ENCODE measurements at regions of chrX and their contacts with region 1.

Region 1: GRCh38 chrX:48025561-48025960 is 18.8 kb downstream of the SPACA5 start:
- DNase-seq: peak; percentile 55
- ATAC-seq: peak; percentile 48
- H3K4me3 Mint-ChIP-seq: no peak overlapping the region
- H3K27ac Mint-ChIP-seq: peak overlapping the region; percentile 66
- H3K4me1 Mint-ChIP-seq: peaks cover 18% of the 10 kb centered on the region
- H3K27me3 Mint-ChIP-seq: no peaks in the 10 kb centered on the region

Region 2: GRCh38 chrX:47828984-47829383 is 196.6 kb before region 1 on chrX:
- CTCF ChIA-PET with region 1: interaction called, 15 read pairs
- POLR2A ChIA-PET with region 1: no interaction called
- DNase-seq: no peak
- ATAC-seq: no peak
- H3K4me3 Mint-ChIP-seq: no peak overlapping the region
- H3K27ac Mint-ChIP-seq: no peak overlapping the region
- H3K4me1 Mint-ChIP-seq: no peaks in the 10 kb centered on the region
- H3K27me3 Mint-ChIP-seq: no peaks in the 10 kb centered on the region

Region 3: DNA sequence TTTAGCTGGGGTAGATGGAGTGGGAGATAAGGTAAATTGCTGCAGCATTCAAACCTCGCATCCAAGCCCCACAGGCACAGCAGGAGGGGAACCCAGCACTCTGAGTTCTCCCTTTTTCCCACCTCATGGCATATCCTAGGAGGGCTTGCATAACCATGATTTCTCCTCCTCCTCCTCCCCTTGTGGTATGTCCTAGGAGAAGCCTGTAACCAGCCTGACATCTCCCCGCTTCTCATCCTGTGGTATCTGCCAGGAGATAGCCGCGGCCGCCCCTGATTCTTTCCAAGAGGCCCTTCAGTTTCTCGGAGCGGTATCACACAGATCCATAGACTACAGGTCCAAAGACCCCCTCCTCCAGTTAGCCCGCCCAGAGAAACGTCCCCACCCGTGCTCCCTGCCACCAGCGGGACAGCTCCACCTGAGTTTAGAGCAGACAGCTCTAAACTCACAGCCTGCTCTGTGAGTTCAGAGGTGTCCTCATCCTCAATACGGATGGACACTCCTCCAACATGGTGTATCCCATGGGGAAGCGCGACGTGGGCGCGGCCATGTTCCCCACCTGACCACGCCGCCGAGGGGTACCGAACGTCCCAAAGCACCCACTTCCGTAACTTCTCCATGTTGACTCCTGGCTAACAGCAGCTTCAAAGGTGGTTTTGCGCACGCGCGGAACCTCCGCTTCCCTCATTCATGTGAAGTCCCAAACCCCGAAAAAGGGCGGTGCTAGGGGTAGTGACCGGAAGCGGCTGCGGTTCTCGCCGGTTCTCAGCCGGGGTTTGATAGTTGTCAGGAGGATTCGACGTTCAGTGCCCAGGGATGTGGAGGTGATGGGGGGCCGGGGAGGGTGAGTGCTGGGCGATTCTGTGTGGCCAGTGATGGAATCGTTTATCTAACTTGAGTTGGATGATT is 189.1 kb before region 1 on chrX and contains the start of gene ZNF81:
- CTCF ChIA-PET with region 1: interaction called, 20 read pairs
- POLR2A ChIA-PET with region 1: interaction called, 3 read pairs
- DNase-seq: peak; percentile 94
- ATAC-seq: peak; percentile 97
- H3K4me3 Mint-ChIP-seq: peak within 1 kb of the TSS; percentile 91
- H3K27ac Mint-ChIP-seq: peak within 1 kb of the TSS; percentile 95
- H3K4me1 Mint-ChIP-seq: peaks cover 20% of the 10 kb centered on the region
- H3K27me3 Mint-ChIP-seq: no peaks in the 10 kb centered on the region
- total RNA-seq, gene ZNF81: 9.4 to 10.4 TPM

Region 4: GRCh38 chrX:47854474-47854873 is 171.1 kb before region 1 on chrX:
- CTCF ChIA-PET with region 1: interaction called, 20 read pairs
- POLR2A ChIA-PET with region 1: no interaction called
- DNase-seq: peak; percentile 26
- ATAC-seq: no peak
- H3K4me3 Mint-ChIP-seq: no peak overlapping the region
- H3K27ac Mint-ChIP-seq: no peak overlapping the region
- H3K4me1 Mint-ChIP-seq: peaks cover 11% of the 10 kb centered on the region
- H3K27me3 Mint-ChIP-seq: no peaks in the 10 kb centered on the region

Region 5: DNA sequence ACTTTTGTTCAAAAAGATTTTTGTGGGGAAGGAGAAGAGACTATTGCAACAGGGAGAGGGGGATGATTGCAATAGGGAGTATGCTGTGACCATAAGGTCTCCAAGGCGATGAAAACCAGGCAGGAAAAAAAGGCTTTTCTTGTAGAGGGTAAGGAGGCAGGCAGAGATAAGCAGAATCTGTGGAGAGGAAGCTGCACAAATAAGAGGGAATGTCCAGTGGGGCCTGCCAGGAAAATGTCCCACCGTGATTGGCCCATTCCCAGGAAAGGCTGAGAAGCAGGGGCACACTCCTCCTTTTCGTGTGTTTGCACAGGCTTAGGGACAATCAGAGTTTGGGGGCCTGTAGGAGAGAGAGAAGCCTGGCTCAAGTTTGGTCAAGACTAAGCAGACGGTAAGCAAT is 10.3 kb after region 1 on chrX:
- CTCF ChIA-PET with region 1: no interaction called
- POLR2A ChIA-PET with region 1: no interaction called
- DNase-seq: no peak
- ATAC-seq: no peak
- H3K4me3 Mint-ChIP-seq: no peak overlapping the region
- H3K27ac Mint-ChIP-seq: no peak overlapping the region
- H3K4me1 Mint-ChIP-seq: no peaks in the 10 kb centered on the region
- H3K27me3 Mint-ChIP-seq: no peaks in the 10 kb centered on the region

Measured in activated CD8-positive, alpha-beta T cell treated with anti-CD3 and anti-CD28 coated beads, Interleukin-2, amount 10 ng/mL, durations not matched to agents 7 days and 5 days (primary cell).